Esophagus squamous epithelium (tissue), 5 donors: ENCODE measurements at regions of chr6 and their contacts with region 1.

Region 1: GRCh38 chr6:146857180-146857979 is 258.6 kb downstream of the ADGB start:
- DNase-seq: no peak
- H3K4me3 ChIP-seq: peak overlapping the region in 3 of 4 donors; percentile 26 to 54 (median 32)
- H3K27ac ChIP-seq: peak overlapping the region; percentile 13 to 70 (median 28)
- H3K4me1 ChIP-seq: peaks cover 0 to 12% (median 3%) of the 10 kb centered on the region in 3 donors
- H3K27me3 ChIP-seq: no peaks in the 10 kb centered on the region
- CTCF ChIP-seq: peak; percentile 94 to 99 (median 96)
- POLR2A ChIP-seq: no peak

Region 2: DNA sequence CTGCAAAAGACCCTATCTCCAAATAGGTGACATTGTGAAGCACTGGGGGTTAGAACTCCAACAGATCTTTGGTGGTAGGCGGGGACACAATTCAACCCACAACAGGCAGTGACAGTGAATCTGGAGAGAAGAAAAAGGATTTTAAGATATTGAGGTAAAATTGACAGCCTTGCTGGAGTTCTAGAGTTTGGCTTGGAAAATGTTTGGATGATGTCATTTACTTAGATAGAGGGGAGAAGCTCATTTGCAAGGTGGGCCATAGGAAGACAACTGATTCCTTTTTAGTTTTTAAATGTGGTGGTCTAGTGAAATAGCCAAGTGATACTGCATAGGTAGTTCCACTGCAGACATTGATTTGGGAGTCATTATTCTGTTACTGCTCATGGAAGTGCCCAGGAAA is 108.4 kb before region 1 on chr6:
- intact Hi-C with region 1: no loop called
- DNase-seq: no peak
- H3K4me3 ChIP-seq: no peak overlapping the region
- H3K27ac ChIP-seq: no peak overlapping the region
- H3K4me1 ChIP-seq: no peaks in the 10 kb centered on the region
- H3K27me3 ChIP-seq: no peaks in the 10 kb centered on the region
- CTCF ChIP-seq: no peak
- POLR2A ChIP-seq: no peak

Region 3: DNA sequence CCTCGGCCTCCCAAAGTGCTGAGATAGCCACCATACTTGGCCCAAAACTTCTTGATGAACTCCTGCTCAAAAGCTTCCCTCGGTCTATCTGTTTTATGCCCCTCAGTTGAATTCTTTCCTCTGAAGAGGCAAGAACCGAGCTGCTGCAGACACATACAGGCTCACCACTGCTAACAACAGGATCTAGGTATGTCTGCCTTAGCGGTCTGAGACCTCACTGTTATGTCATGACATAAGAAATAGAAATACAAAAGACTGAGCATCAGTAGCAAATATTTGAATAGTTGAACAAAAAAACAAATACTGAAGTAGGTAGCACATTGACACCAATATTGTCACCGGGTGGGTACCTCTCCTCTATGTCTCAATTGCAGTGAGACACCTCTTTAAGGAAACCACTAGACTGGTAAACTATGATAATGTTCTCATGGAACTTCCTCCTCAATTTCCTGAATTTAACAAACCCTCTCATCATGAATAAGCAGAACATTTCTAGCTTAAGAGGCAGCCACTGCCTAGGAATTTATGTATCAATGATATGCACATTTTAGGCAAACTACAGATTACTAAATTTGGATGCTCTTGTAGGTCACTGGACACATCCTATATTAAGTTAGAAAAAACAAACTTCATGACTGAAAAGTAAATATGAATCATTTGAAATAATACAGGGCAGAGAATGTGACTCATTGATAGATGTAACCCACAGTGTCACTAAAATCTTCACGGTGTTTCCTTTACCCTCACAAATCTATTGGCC is 337.5 kb after region 1 on chr6:
- intact Hi-C with region 1: no loop called
- DNase-seq: no peak
- H3K4me3 ChIP-seq: no peak overlapping the region
- H3K27ac ChIP-seq: no peak overlapping the region
- H3K4me1 ChIP-seq: no peaks in the 10 kb centered on the region
- H3K27me3 ChIP-seq: no peaks in the 10 kb centered on the region
- CTCF ChIP-seq: no peak
- POLR2A ChIP-seq: no peak

Region 4: DNA sequence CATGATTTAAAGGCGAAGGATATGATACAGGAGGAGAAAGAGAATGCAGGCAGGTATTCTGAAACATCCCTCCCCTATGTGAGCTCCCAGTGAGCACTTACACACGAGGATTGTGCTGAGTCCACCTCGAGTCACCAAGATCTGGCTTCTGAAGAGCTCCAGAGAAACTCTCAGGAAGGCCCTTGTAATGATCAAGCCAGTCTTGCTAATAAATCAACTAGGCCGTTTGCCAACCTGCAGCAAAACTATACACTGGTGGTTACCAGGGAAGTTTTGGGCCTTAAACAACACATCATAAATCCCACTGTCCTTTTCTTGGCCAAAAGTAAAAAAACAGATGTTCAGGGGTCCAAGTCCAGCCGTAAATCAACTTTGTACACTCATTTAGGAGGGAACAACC is 426.1 kb after region 1 on chr6:
- intact Hi-C with region 1: loop called (anchors 5 kb)
- DNase-seq: no peak
- H3K4me3 ChIP-seq: no peak overlapping the region
- H3K27ac ChIP-seq: no peak overlapping the region
- H3K4me1 ChIP-seq: peaks cover 0 to 5% (median 0%) of the 10 kb centered on the region in 3 donors
- H3K27me3 ChIP-seq: no peaks in the 10 kb centered on the region
- CTCF ChIP-seq: no peak
- POLR2A ChIP-seq: no peak